ENCODE measurements at regions of chr4 and their contacts with region 1.

Region 1: GRCh38 chr4:139515531-139515958 is 40.5 kb downstream of the SETD7 start:
- DNase-seq: no peak
- ATAC-seq: no peak
- H3K4me3 ChIP-seq: no peak overlapping the region
- H3K27ac ChIP-seq: no peak overlapping the region
- H3K4me1 ChIP-seq: no peaks in the 10 kb centered on the region
- H3K27me3 ChIP-seq: no peaks in the 10 kb centered on the region
- CTCF ChIP-seq: no peak

Region 2: GRCh38 chr4:139526922-139527321 is 11.4 kb after region 1 on chr4:
- CTCF ChIA-PET with region 1: interaction called, 20 read pairs
- POLR2A ChIA-PET with region 1: no interaction called
- intact Hi-C with region 1: no loop called
- DNase-seq: peak; percentile 80
- ATAC-seq: peak; percentile 95
- H3K4me3 ChIP-seq: no peak overlapping the region
- H3K27ac ChIP-seq: no peak overlapping the region
- H3K4me1 ChIP-seq: peaks cover 23% of the 10 kb centered on the region
- H3K27me3 ChIP-seq: no peaks in the 10 kb centered on the region
- CTCF ChIP-seq: no peak